A549 (cell line): ENCODE measurements at regions of chr10 and their contacts with region 1.

Region 1: GRCh38 chr10:44959247-44960087 is at the start of gene RASSF4:
- DNase-seq: peak; percentile 85 to 89
- ATAC-seq: peak; percentile 97 to 100
- H3K4me3 ChIP-seq: peak within 1 kb of the TSS; percentile 53
- H3K27ac ChIP-seq: peak within 1 kb of the TSS; percentile 86
- H3K4me1 ChIP-seq: peaks cover 12% of the 10 kb centered on the region; the same call in 2 of the 3 replicates
- CTCF ChIP-seq: no peak
- EP300 ChIP-seq: no peak
- POLR2A ChIP-seq: peak; percentile 82
- RAD21 ChIP-seq: no peak
- polyA plus RNA-seq, gene RASSF4: 2.1 and 2.2 TPM in 2 replicates

Region 2: GRCh38 chr10:44947371-44948152 is 11.9 kb before region 1 on chr10:
- CTCF ChIA-PET with region 1: interaction called, 5 read pairs
- POLR2A ChIA-PET with region 1: interaction called, 13 read pairs
- DNase-seq: no peak
- ATAC-seq: no peak
- H3K4me3 ChIP-seq: no peak overlapping the region
- H3K27ac ChIP-seq: no peak overlapping the region
- H3K4me1 ChIP-seq: no peaks in the 10 kb centered on the region
- CTCF ChIP-seq: no peak
- EP300 ChIP-seq: no peak
- POLR2A ChIP-seq: no peak
- RAD21 ChIP-seq: no peak

Region 3: DNA sequence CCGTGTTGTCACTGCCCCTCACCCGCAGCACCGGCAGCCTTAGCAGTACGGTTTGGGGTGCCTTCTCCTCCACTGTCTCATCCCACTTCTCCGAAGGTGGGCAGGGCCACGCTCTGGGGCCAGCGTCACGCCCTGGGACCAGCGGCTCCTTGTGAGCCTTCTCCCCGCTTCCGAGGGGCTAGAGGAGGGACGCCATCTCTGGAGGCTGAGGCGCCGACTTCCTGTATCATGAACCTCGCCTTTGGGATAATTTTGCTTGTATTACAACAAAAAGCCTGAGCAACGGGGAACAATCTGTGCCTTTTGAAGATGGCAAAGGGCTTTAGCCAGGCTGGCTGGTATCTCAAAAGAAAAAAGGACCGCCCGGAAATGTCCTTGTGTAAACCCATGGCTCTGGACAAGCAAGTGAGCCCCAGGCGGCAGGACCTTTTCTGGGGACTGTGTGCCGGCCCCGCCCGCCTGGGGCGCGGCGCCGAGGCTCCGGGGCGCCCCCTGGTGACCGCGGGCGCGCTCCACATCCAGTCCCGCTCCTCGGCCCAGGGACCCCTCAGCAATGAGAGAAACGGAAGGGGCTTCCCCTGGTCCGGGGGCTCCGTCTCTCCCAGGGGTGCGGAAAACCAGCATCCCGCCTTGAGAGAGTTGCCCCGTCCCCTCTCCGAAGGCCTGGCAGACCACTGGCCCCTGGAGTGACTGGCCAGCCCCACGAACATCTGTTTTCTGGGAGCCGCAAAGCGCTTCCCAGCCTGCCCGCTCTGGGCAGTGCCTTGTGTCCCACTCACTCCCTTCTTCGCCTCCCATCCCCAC is 15.4 kb after region 1 on chr10:
- CTCF ChIA-PET with region 1: interaction called, 9 read pairs
- POLR2A ChIA-PET with region 1: interaction called, 12 read pairs
- DNase-seq: peak; percentile 55 to 72
- ATAC-seq: peak; percentile 70 to 93
- H3K4me3 ChIP-seq: peak overlapping the region; percentile 47
- H3K27ac ChIP-seq: peak overlapping the region; percentile 76 to 90
- H3K4me1 ChIP-seq: peaks cover 33% of the 10 kb centered on the region
- CTCF ChIP-seq: peak; percentile 91
- EP300 ChIP-seq: no peak
- POLR2A ChIP-seq: no peak
- RAD21 ChIP-seq: peak; percentile 47 to 75; a peak in 4 of 5 replicates